ENCODE measurements at regions of chr5 and their contacts with region 1.

Region 1: GRCh38 chr5:115309751-115310370 is 13.4 kb upstream of the CCDC112 start:
- DNase-seq: no peak
- CTCF ChIP-seq: peak; percentile 52

Region 2: GRCh38 chr5:115296124-115297022 is 13.5 kb before region 1 on chr5 and contains the start of gene CCDC112:
- CTCF ChIA-PET with region 1: interaction called, 33 read pairs
- POLR2A ChIA-PET with region 1: no interaction called
- DNase-seq: peak; percentile 95
- CTCF ChIP-seq: no peak

Region 3: GRCh38 chr5:115321309-115321708 is 11.4 kb after region 1 on chr5:
- CTCF ChIA-PET with region 1: interaction called, 10 read pairs
- POLR2A ChIA-PET with region 1: no interaction called
- DNase-seq: no peak
- CTCF ChIP-seq: no peak

Region 4: GRCh38 chr5:115329475-115329874 is 19.6 kb after region 1 on chr5:
- CTCF ChIA-PET with region 1: interaction called, 14 read pairs
- POLR2A ChIA-PET with region 1: no interaction called
- DNase-seq: no peak
- CTCF ChIP-seq: no peak

Region 5: DNA sequence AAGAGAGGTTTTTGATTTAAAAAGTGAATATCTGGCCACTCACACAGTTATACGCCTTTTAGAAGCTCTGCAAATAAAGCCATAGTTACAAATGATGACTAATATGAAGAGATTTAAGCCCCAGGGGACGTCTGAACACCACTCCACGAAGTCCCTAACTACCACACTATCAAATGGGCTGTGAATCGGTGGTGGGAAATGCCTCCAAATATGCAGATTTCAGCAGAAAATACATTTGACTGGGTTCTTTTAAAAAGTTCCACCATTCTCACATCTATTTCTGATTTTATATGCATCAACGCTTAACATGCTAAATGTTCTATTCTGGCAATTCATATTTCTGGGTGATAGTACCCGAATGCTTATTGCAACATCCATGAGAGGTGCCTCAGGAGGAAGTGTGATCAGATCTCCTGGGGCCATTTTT is 269.9 kb after region 1 on chr5:
- CTCF ChIA-PET with region 1: interaction called, 111 read pairs
- POLR2A ChIA-PET with region 1: no interaction called
- DNase-seq: peak; percentile 38
- CTCF ChIP-seq: no peak

Region 6: DNA sequence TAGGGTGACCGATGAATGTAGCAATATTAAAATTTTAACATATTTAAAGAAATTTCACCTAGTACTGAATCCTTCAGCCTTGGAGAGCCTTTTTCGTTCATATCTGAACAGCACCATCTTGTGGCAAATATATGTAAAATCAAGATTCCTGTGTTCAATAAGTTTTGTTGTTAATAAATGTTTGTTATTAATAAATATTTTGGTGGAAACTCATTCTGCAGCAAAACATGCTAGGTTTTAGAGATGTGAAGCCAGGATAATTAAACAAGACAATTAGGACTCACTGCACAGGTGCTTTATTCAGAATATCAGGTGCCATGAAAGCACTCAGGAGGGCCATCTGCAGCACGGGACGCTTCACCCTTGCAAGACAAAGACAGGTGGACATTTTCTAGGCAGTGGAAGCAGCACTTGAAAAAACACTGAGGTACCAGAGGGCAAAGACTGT is 276.8 kb after region 1 on chr5:
- CTCF ChIA-PET with region 1: interaction called, 39 read pairs
- POLR2A ChIA-PET with region 1: no interaction called
- DNase-seq: no peak
- CTCF ChIP-seq: peak; percentile 45

Region 7: DNA sequence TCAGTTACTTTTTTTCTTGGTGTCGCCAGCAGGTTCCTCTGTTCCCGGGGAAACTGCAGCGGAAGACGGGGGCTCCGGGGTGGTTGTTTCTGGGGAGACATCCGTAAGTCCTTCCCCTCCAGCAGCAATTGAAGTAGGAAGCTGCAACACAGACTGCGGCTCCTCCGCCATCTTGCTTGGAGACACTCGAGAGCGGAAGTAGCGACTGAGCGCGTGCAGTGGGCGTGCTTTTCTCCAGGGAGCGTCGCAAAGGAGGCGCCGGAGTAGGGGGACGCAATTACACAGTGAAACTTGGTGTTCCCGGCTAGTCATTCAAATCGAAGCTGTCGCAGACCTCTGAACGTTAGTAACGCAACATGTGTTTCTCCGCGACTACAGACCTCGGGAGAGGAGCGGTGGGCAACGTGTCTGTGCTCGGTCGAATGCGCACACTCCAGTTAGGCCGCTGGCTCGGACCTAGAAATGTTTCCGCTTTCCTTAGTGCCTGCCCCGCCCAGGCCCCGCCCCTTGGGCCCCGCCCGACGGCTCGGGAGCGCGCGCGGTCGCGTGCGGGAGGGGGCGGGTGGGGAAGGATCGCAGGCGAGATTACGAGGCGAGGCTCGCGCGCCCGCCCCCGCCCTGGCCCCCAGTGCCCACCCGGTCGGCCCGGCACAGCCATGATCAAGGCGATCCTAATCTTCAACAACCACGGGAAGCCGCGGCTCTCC is 531.7 kb after region 1 on chr5 and contains the starts of genes AP3S1 and ATG12:
- CTCF ChIA-PET with region 1: interaction called, 10 read pairs
- POLR2A ChIA-PET with region 1: no interaction called
- DNase-seq: peak; percentile 89
- CTCF ChIP-seq: no peak

Region 8: DNA sequence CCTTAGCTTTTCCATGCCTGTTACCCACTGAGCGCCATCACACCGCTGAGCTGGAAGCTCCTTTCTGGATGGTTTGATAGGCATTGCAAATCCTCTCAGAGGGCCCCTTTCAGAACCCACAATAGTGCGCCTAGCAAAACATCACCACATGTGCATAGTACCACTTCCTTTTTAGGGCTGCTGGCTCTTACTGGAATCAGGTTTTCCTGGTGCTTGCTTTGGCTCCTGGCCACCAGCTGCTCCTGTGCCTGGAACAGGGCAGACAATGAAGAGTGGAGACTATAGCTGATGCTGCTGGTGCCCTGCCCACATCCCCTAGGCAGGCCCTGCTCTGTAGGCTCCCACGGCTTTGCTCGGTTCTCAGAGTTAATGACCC is 1428.4 kb after region 1 on chr5:
- CTCF ChIA-PET with region 1: no interaction called
- POLR2A ChIA-PET with region 1: no interaction called
- DNase-seq: no peak
- CTCF ChIP-seq: no peak

Measured in GM10248 (cell line).